ENCODE measurements at regions of chr4 and their contacts with region 1.

Region 1: GRCh38 chr4:174282836-174283506 is 496 bp downstream of the FBXO8 start:
- DNase-seq: peak; percentile 54
- ATAC-seq: peak; percentile 96
- H3K4me3 Mint-ChIP-seq: peak overlapping the region; percentile 99
- H3K27ac Mint-ChIP-seq: peak overlapping the region; percentile 99
- H3K4me1 Mint-ChIP-seq: peaks cover 58% of the 10 kb centered on the region
- H3K27me3 Mint-ChIP-seq: no peaks in the 10 kb centered on the region
- CTCF ChIP-seq: no peak

Region 2: DNA sequence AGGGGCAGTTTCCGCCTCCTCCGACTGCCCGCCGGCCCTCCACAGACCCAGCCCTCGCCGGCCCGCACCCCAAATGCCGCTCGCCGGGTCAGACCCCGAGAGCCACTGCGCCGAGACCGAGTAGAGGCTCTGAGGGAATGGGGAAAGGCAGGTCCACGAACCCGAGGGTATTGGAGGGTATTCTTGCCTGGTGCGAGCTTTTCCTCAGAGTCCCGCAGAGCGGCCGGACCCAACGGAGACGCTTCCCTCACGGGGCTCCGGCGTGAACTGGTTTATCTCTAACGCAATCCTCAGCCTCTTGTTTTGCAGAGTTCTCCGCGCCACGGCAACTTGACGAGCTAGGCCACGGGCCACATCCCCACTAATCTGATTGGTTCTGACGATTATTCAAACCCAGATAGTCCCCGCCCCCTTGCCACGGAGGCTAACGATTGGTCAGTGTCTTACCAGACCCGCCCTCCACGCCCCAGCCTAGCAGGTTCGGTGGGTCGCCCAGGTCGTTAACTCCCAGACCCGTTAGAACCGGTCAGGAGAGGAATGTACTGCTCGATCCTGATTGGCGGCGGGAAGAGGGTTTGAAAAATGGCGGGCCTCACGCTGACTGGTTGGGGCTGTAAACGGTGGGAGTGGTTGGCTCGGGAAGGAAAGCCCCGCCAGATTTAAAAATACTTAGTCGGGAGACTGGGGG is 948.7 kb before region 1 on chr4 and contains the start of gene HMGB2:
- CTCF ChIA-PET with region 1: no interaction called
- POLR2A ChIA-PET with region 1: interaction called, 10 read pairs
- intact Hi-C with region 1: loop called (anchors 5 kb)
- DNase-seq: peak; percentile 95
- ATAC-seq: peak; percentile 93
- H3K4me3 Mint-ChIP-seq: peak within 1 kb of the TSS; percentile 96
- H3K27ac Mint-ChIP-seq: peak within 1 kb of the TSS; percentile 98
- H3K4me1 Mint-ChIP-seq: peaks cover 25% of the 10 kb centered on the region
- H3K27me3 Mint-ChIP-seq: no peaks in the 10 kb centered on the region
- CTCF ChIP-seq: no peak
- total RNA-seq, gene HMGB2: 63.2 and 63.9 TPM in 2 replicates

Region 3: DNA sequence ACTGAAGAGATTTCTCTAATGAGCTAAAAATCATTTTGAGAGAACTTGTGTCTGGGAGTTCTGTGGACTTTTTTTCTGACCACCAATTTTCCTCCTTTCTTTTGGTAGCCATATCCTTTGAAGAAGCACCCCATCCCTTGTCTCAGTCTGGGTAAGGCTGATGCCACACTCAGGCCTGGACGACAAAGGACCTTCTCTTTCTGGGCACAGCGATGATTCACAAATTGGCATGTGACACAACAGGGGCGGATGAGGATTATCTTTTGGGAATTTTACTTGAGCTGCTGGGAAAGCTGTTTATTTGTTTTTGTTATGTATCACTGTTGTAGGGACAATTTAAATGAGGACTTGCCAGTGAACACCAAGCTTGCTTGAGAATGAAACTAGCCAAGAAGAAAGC is 519.6 kb before region 1 on chr4:
- CTCF ChIA-PET with region 1: no interaction called
- POLR2A ChIA-PET with region 1: no interaction called
- intact Hi-C with region 1: no loop called
- DNase-seq: no peak
- ATAC-seq: no peak
- H3K4me3 Mint-ChIP-seq: no peak overlapping the region
- H3K27ac Mint-ChIP-seq: no peak overlapping the region
- H3K4me1 Mint-ChIP-seq: no peaks in the 10 kb centered on the region
- H3K27me3 Mint-ChIP-seq: no peaks in the 10 kb centered on the region
- CTCF ChIP-seq: no peak

Region 4: GRCh38 chr4:174069848-174070330 is 213.1 kb before region 1 on chr4:
- CTCF ChIA-PET with region 1: no interaction called
- POLR2A ChIA-PET with region 1: no interaction called
- intact Hi-C with region 1: no loop called
- DNase-seq: no peak
- ATAC-seq: no peak
- H3K4me3 Mint-ChIP-seq: no peak overlapping the region
- H3K27ac Mint-ChIP-seq: no peak overlapping the region
- H3K4me1 Mint-ChIP-seq: no peaks in the 10 kb centered on the region
- H3K27me3 Mint-ChIP-seq: no peaks in the 10 kb centered on the region
- CTCF ChIP-seq: no peak

Region 5: GRCh38 chr4:174135936-174136406 is 147.0 kb before region 1 on chr4:
- CTCF ChIA-PET with region 1: no interaction called
- POLR2A ChIA-PET with region 1: no interaction called
- intact Hi-C with region 1: no loop called
- DNase-seq: no peak
- ATAC-seq: no peak
- H3K4me3 Mint-ChIP-seq: no peak overlapping the region
- H3K27ac Mint-ChIP-seq: no peak overlapping the region
- H3K4me1 Mint-ChIP-seq: no peaks in the 10 kb centered on the region
- H3K27me3 Mint-ChIP-seq: no peaks in the 10 kb centered on the region
- CTCF ChIP-seq: no peak

Region 6: DNA sequence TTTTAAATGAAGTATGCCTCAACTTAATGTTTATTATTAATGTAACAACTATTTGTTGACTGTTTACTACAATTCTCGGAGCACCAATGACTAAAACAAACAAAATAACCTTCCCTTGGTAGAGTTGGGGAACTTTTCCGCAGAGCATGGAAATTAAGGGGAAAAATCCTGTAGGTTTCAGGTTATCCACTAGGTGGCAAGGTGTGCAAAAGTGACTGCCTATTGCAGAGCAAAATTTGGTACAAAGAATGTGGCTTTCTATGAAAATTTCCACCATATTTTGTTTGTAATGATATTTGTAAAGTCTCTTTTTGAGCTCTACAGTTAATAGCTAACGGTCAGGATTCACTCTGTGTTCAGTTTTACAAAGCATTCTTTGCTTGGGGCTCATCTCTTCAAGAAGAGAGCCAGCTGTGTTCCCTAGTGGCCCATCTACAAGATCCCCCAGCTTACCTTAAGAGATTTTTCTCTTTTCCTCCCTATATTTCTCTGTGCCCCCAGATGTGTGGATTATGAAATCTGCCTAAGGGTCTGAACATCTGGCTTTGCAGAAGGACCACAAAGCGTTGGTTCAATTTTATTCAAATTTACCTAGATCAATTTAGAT is 60.6 kb before region 1 on chr4:
- CTCF ChIA-PET with region 1: no interaction called
- POLR2A ChIA-PET with region 1: no interaction called
- intact Hi-C with region 1: loop called (anchors 5 kb)
- DNase-seq: no peak
- ATAC-seq: no peak
- H3K4me3 Mint-ChIP-seq: no peak overlapping the region
- H3K27ac Mint-ChIP-seq: no peak overlapping the region
- H3K4me1 Mint-ChIP-seq: peaks cover 9% of the 10 kb centered on the region
- H3K27me3 Mint-ChIP-seq: peaks cover 39% of the 10 kb centered on the region
- CTCF ChIP-seq: no peak